MCF 10A (cell line): ENCODE measurements at regions of chr2 and their contacts with region 1.

Region 1: DNA sequence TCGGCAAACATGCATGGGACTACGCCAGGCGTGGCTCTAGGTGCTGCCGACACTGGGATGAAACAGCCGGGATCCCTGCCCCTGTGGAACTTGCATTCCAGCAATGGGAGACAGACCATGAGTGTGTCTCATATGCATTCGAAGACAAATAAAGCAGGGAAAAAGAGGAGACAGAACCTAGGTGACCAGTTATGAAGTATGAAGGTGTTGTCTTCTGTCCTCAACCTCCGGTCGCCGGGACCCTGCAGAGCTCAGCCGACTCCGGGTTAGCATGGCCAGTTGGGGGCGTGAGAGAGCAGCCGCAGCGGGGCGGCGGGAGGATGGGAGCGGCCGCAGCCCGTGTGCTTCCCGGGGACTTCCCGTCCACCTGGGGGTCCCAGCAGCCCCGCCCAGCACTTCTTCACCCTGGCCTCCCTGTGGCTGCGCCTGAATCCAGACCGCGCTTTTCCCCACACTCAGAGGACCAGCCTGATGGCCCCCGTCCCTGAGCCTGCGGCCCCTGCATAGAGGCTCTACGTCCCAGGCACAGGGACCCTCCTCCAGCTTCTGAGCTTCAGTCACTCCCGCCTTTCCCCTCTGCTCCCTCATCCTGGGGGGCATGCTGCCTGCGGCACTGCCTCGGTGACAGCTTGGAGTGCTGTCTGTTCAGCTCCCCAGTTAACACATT is 11.4 kb downstream of the ID2 start:
- DNase-seq: peak; percentile 33
- H3K4me3 Mint-ChIP-seq: no peak overlapping the region
- H3K27ac Mint-ChIP-seq: no peak overlapping the region
- H3K4me1 Mint-ChIP-seq: no peaks in the 10 kb centered on the region
- H3K27me3 Mint-ChIP-seq: peaks cover 19% of the 10 kb centered on the region
- CTCF ChIP-seq: peak; percentile 57

Region 2: DNA sequence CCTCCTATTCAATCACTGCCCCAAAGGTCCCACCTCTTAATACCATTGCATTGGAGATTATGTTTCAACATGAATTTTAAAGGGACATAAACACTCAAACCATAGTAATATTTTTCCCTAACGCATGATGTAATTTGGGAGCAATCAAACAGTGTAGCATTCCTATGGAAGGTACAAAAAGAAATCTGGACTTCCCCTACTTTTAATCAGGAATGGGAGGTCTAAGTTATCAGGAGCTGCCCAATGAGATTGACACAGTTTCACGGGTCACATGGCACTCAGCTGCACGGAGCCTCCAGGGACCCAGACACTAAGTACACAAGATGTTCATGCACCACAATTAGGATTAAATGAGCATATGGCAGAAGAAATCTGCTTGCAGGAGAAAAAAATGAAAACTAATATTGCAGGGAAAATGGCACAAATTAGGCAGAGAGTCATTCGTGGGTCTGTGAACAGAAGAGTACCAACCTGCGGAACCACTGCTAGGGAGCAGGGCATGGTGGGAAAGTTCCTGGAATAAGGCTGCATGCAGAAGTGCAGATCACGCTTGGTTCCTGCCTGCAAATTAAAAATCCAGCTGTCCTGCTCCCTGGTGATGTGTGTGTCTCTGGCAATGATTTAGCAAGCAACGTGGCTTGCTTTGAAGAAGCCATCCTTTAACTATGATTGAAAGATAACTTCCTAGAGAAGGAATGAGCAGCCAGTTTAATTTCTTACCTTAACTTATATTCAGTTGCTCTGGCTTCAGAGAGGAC is 338.0 kb before region 1 on chr2:
- CTCF ChIA-PET with region 1: no interaction called
- POLR2A ChIA-PET with region 1: no interaction called
- intact Hi-C with region 1: no loop called
- DNase-seq: no peak
- H3K4me3 Mint-ChIP-seq: no peak overlapping the region
- H3K27ac Mint-ChIP-seq: no peak overlapping the region
- H3K4me1 Mint-ChIP-seq: no peaks in the 10 kb centered on the region
- H3K27me3 Mint-ChIP-seq: no peaks in the 10 kb centered on the region
- CTCF ChIP-seq: no peak

Region 3: GRCh38 chr2:8544786-8545694 is 148.2 kb before region 1 on chr2:
- CTCF ChIA-PET with region 1: no interaction called
- POLR2A ChIA-PET with region 1: no interaction called
- intact Hi-C with region 1: no loop called
- DNase-seq: peak; percentile 67
- H3K4me3 Mint-ChIP-seq: no peak overlapping the region
- H3K27ac Mint-ChIP-seq: no peak overlapping the region
- H3K4me1 Mint-ChIP-seq: no peaks in the 10 kb centered on the region
- H3K27me3 Mint-ChIP-seq: no peaks in the 10 kb centered on the region
- CTCF ChIP-seq: no peak

Region 4: DNA sequence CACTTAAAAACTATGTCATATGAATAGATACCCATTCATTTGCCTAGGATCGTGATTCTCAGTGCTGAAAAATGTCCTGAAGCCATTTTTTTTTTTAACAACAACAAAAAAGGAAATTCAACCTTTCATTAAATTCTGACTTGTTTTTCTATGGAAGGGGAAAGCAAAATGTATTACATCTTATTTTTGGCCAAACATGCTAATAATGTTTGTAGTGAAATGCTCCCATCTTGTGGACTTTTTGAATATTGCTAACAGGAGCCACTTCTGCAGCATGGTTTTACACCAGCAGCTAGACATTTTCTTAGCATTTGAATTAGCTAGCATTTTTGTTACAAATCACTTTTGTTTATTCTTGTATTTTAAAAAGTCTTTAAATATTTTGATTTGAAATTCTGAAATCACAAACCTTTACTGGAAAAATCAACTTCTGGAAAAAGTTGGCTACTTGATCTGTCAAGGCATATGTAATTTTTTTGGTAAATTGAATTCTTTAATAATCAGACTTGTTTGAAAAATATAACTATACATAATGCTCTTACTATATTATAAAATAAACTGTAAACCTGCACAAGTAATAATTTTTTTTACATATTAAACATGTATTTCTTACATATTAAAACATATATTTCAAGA is 68.4 kb after region 1 on chr2:
- CTCF ChIA-PET with region 1: no interaction called
- POLR2A ChIA-PET with region 1: no interaction called
- intact Hi-C with region 1: loop called (anchors 1 kb)
- DNase-seq: peak; percentile 47
- H3K4me3 Mint-ChIP-seq: no peak overlapping the region
- H3K27ac Mint-ChIP-seq: no peak overlapping the region
- H3K4me1 Mint-ChIP-seq: no peaks in the 10 kb centered on the region
- H3K27me3 Mint-ChIP-seq: no peaks in the 10 kb centered on the region
- CTCF ChIP-seq: peak; percentile 41